Activated CD4-positive, alpha-beta memory T cell treated with anti-CD3 and anti-CD28 coated beads, Interleukin-2, amount 10 ng/mL, durations not matched to agents 7 days and 5 days (primary cell): ENCODE measurements at regions of chr17 and their contacts with region 1.

Region 1: GRCh38 chr17:35063514-35064223 is at the start of gene RFFL:
- DNase-seq: peak; percentile 91
- H3K4me3 Mint-ChIP-seq: peak within 1 kb of the TSS; percentile 48
- H3K27ac Mint-ChIP-seq: peak within 1 kb of the TSS; percentile 94
- H3K4me1 Mint-ChIP-seq: peaks cover 60% of the 10 kb centered on the region
- H3K27me3 Mint-ChIP-seq: no peaks in the 10 kb centered on the region
- total RNA-seq, gene RFFL: 47.3 to 53.9 TPM

Region 2: DNA sequence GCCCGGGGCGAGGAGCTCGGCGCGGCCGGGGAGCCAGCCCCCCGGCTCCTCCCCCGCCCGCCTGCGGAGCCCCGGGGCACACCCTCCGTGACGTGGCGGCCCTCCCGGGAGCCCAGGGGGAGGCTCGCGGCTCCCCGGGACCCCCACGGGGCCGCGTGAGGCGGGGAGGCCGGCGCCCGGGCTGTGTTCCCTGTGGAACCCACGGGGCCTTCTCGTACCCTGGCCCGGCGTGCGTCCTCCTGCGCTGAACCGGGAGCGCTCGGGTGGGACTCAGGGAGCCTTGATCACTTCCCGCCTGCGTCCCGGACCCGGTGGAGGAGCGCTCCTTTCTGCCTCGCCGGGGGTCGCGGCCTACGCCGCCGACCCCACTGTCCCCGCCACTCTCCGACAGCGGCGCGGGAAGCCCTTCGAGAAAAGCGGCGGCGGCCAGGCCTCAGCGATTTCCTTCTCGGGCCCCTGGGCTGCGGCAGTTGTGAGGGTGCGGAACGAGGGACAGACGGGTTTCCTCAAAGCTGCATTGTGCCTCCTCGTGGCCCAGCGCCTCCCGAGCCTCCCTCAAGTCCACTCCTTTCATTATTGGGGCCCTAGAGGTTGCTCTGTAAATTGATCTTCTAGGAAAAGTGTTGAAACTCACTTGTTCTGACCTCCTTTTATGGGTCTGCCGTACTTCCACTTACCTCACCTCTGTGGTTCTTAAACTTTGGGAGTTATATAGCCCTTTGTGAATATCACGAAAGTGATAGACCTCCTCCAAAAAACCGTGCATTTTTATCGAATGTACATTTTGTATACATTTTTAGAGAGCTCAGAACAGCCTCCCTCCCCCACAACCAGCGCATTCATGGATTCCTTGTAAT is 82.8 kb before region 1 on chr17:
- CTCF ChIA-PET with region 1: interaction called, 4 read pairs
- POLR2A ChIA-PET with region 1: interaction called, 17 read pairs
- DNase-seq: peak; percentile 81
- H3K4me3 Mint-ChIP-seq: peak overlapping the region; percentile 79
- H3K27ac Mint-ChIP-seq: peak overlapping the region; percentile 93
- H3K4me1 Mint-ChIP-seq: peaks cover 54% of the 10 kb centered on the region
- H3K27me3 Mint-ChIP-seq: no peaks in the 10 kb centered on the region

Region 3: DNA sequence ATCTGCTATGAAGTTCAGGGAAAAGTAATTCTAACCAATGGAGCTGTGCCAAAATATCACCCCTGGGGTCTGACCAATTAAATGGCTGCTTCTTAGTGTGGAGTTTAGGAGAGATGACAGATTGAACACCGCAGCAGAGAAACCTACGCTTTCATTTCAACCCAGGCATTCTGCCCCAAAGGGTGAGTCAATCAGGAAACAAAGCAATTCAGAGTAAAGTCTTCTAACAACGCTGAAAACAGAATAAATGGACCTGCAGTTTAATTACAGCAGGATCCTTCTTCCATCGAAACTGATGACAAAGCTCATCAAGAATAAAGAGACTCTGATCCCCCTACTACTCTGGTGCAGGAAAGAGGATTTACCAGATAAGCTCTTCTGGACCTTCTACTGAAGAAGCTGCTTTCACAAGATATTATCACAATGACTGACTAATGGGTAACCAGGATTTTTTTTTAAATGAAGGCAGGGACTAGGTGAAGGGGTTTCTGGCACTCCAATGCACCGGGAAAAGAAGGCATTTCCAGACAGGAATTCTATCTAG is 16.9 kb before region 1 on chr17:
- CTCF ChIA-PET with region 1: interaction called, 24 read pairs
- POLR2A ChIA-PET with region 1: interaction called, 126 read pairs
- DNase-seq: peak; percentile 77
- H3K4me3 Mint-ChIP-seq: peak overlapping the region; percentile 70
- H3K27ac Mint-ChIP-seq: peak overlapping the region; percentile 93
- H3K4me1 Mint-ChIP-seq: peaks cover 55% of the 10 kb centered on the region
- H3K27me3 Mint-ChIP-seq: no peaks in the 10 kb centered on the region

Region 4: DNA sequence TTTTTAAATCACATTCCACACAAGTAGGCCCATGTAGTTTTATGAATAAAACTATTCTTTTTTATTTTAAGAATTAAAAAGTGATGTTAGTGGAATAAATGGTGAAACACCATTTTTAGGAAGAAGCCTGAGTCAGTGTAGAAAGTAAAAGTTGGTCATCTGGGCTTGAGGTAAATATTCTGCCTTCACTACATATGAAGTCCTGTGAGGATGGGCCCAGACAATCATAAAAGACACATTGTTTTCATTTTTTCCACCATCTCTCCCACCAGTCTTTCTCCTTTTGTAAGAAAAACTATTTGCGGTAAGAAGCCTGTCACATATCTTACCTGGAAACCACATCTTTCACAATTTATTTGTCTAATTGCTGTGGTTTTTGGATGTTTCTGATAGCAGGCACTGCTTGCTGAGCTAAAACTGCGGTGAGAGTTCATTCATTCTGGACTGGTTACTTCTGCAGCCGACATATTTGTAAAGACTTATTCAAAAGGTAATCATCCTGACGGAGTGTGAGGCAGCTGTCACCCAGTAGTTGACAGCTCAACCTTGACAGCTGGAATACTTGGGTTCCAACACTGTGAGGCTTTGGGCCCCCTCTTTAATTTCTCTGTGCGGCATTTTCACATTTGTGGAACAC is 10.4 kb after region 1 on chr17:
- CTCF ChIA-PET with region 1: interaction called, 37 read pairs
- POLR2A ChIA-PET with region 1: interaction called, 164 read pairs
- DNase-seq: no peak
- H3K4me3 Mint-ChIP-seq: peak overlapping the region; percentile 24
- H3K27ac Mint-ChIP-seq: peak overlapping the region; percentile 55
- H3K4me1 Mint-ChIP-seq: peaks cover 67% of the 10 kb centered on the region
- H3K27me3 Mint-ChIP-seq: no peaks in the 10 kb centered on the region

Region 5: GRCh38 chr17:35088881-35089585 is 25.4 kb after region 1 on chr17:
- CTCF ChIA-PET with region 1: interaction called, 15 read pairs
- POLR2A ChIA-PET with region 1: interaction called, 164 read pairs
- DNase-seq: peak; percentile 93
- H3K4me3 Mint-ChIP-seq: peak overlapping the region; percentile 89
- H3K27ac Mint-ChIP-seq: peak overlapping the region; percentile 90
- H3K4me1 Mint-ChIP-seq: peaks cover 54% of the 10 kb centered on the region
- H3K27me3 Mint-ChIP-seq: no peaks in the 10 kb centered on the region